ENCODE measurements at regions of chr9 and their contacts with region 1.

Region 1: GRCh38 chr9:136143216-136144001 is 24.7 kb upstream of the TMEM250 start:
- DNase-seq: peak; percentile 57
- H3K4me3 ChIP-seq: no peak overlapping the region
- H3K27ac ChIP-seq: no peak overlapping the region
- H3K4me1 ChIP-seq: no peaks in the 10 kb centered on the region
- H3K27me3 ChIP-seq: peaks cover 1 to 2% of the 10 kb centered on the region in 2 experiments
- CTCF ChIP-seq: peak; percentile 45 to 73
- POLR2A ChIP-seq: no peak

Region 2: GRCh38 chr9:135992486-135993408 is 150.7 kb before region 1 on chr9:
- CTCF ChIA-PET with region 1: no interaction called
- POLR2A ChIA-PET with region 1: no interaction called
- dilution Hi-C with region 1: no loop called
- intact Hi-C with region 1: no loop called
- DNase-seq: peak; percentile 81
- H3K4me3 ChIP-seq: no peak overlapping the region
- H3K27ac ChIP-seq: peak overlapping the region; percentile 86
- H3K4me1 ChIP-seq: peaks cover 22% of the 10 kb centered on the region
- H3K27me3 ChIP-seq: no peaks in the 10 kb centered on the region
- CTCF ChIP-seq: no peak
- POLR2A ChIP-seq: peak; percentile 69

Region 3: DNA sequence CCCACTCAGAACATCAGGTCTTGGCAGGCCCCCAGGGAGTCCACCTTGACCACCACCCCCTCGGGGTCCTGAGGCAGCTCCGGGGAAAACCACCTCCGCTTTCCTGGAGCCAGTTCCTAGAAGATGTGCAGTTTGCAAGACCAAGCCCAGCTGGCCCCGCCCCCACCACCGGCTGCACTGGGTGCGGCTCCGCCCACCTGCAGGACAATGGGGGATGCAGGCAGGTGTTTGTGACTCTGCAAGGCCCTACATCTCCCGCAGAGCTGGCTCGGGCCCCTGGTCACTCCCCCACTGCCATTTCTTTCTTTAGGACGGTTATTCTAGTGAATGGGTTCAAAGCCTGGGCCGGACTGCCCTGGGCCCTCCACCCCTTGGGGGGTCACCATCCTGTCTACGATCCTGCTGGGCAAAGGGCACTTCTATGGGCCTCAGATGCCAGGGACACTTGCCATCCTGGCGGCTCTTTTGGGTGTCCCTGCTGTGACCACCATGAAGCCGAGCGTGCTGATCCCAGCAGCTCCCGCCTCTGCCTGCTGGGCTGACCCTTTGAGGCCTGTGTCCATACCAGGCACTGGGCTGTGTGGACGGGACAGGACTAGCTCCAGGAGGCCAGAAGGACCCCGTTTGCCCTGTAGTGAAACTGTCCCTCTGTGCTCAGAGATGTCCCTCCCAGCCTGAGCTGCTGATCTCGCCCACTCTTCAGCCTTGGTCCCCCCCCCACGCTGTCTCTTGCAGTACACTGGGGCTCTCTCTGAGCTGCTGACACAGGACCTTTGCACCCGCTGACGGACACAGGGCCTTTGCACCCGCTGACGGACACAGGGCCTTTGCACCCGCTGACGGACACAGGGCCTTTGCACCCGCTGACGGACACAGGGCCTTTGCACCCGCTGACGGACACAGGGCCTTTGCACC is 42.5 kb before region 1 on chr9:
- CTCF ChIA-PET with region 1: no interaction called
- POLR2A ChIA-PET with region 1: no interaction called
- dilution Hi-C with region 1: no loop called
- intact Hi-C with region 1: no loop called
- DNase-seq: no peak
- H3K4me3 ChIP-seq: no peak overlapping the region
- H3K27ac ChIP-seq: no peak overlapping the region
- H3K4me1 ChIP-seq: peaks cover 1% of the 10 kb centered on the region
- H3K27me3 ChIP-seq: no peaks in the 10 kb centered on the region
- CTCF ChIP-seq: no peak
- POLR2A ChIP-seq: no peak

Region 4: DNA sequence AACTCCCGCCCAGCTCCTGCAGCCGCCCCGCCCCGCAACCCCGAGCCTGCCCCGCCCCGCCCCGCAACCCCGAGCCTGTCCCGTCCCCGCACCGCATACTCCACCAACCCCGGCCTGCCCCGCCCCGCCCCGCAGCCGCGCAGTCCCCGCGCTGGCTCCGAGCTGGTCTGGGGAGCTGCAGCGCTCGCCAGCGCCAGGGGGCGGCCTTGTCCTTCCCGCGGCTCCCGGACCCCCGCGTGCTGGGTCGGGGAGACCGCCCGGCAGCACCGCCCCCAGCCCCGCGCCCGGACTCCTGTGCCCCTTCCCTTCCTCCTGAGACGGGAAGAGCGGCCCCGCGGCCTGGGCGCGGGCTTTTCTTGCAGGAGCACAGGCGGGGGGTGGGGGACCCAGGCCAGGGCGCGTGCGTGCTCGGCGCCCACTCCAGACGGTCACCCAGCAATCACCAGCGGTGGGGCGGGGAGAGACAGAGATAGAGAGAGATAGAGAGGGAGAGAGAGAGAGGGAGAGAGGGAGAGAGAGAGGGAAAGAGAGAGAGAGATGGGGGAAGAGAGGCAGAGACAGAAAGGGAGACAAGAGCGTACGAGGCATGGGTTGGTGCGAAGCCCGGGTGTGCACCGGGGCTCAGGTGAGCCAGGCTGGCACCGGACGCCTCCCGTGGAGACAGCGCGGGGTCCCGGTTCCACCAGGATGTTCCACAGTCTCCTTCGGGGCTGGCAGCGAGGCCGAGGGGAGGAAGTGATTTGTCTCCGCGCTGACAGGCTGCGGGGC is 10.0 kb before region 1 on chr9:
- CTCF ChIA-PET with region 1: interaction called, 13 read pairs
- POLR2A ChIA-PET with region 1: no interaction called
- dilution Hi-C with region 1: no loop called
- intact Hi-C with region 1: no loop called
- DNase-seq: no peak
- H3K4me3 ChIP-seq: peak overlapping the region in 1 of 3 experiments; percentile 35
- H3K27ac ChIP-seq: no peak overlapping the region
- H3K4me1 ChIP-seq: peaks cover 4% of the 10 kb centered on the region
- H3K27me3 ChIP-seq: peaks cover 26 to 30% of the 10 kb centered on the region in 2 experiments
- CTCF ChIP-seq: peak; percentile 39 to 68
- POLR2A ChIP-seq: no peak

Region 5: GRCh38 chr9:136220017-136220729 is 76.8 kb after region 1 on chr9:
- CTCF ChIA-PET with region 1: interaction called, 11 read pairs
- POLR2A ChIA-PET with region 1: no interaction called
- dilution Hi-C with region 1: no loop called
- intact Hi-C with region 1: no loop called
- DNase-seq: no peak
- H3K4me3 ChIP-seq: no peak overlapping the region
- H3K27ac ChIP-seq: no peak overlapping the region
- H3K4me1 ChIP-seq: no peaks in the 10 kb centered on the region
- H3K27me3 ChIP-seq: no peaks in the 10 kb centered on the region
- CTCF ChIP-seq: no peak
- POLR2A ChIP-seq: no peak

Region 6: GRCh38 chr9:136225748-136226679 is 82.6 kb after region 1 on chr9:
- CTCF ChIA-PET with region 1: interaction called, 8 read pairs
- POLR2A ChIA-PET with region 1: no interaction called
- dilution Hi-C with region 1: no loop called
- intact Hi-C with region 1: loop called (anchors 1 kb)
- DNase-seq: peak; percentile 42
- H3K4me3 ChIP-seq: no peak overlapping the region
- H3K27ac ChIP-seq: no peak overlapping the region
- H3K4me1 ChIP-seq: peaks cover 7% of the 10 kb centered on the region
- H3K27me3 ChIP-seq: no peaks in the 10 kb centered on the region
- CTCF ChIP-seq: peak; percentile 82 to 96
- POLR2A ChIP-seq: no peak